GM12878 (cell line): ENCODE measurements at regions of chr10 and their contacts with region 1.

Region 1: DNA sequence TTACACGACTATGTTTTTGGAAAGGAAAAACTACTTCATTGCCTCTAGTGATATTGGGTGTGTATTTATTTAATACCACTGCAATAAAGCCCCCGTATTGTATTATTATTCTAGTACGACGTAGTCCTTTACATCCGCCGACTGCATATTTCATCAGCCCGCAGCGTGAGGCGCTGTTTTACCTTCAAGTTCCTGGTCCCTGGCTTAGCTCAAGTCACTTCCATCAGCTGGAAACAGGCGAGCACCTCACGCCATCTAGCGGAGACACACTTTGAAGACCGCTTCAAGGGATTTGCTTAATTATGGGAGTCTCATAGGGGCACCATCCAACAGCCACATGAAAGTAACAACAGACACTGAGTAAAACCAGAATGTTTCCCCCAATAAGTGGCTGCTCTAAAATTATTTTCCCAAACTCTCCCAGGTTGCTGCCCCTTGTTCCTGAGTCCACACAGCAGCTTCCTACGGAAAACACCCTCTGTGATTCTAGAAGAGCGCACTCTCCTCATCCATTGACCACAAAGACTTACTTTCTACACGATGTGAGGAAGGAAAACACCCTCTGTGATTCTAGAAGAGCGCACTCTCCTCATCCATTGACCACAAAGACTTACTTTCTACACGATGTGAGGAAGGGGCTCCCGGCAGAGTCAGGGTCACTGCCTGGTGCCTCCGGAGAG is 15.7 kb upstream of the ITIH2 start:
- DNase-seq: peak; percentile 62
- ATAC-seq: peak; percentile 92
- H3K4me3 ChIP-seq: no peak overlapping the region
- H3K27ac ChIP-seq: no peak overlapping the region
- H3K4me1 ChIP-seq: no peaks in the 10 kb centered on the region
- H3K27me3 ChIP-seq: no peaks in the 10 kb centered on the region
- CTCF ChIP-seq: peak; percentile 86 to 95 (median 89)
- EP300 ChIP-seq: no peak
- POLR2A ChIP-seq: no peak
- RAD21 ChIP-seq: peak; percentile 89

Region 2: GRCh38 chr10:6920072-6921019 is 767.0 kb before region 1 on chr10:
- CTCF ChIA-PET with region 1: interaction called, 8 read pairs
- POLR2A ChIA-PET with region 1: no interaction called
- RAD21 ChIA-PET with region 1: interaction called, 8 read pairs
- SMC1A ChIA-PET with region 1: interaction called, 4 read pairs
- in situ Hi-C with region 1: no loop called
- intact Hi-C with region 1: loop called (anchors 10 kb)
- DNase-seq: no peak
- ATAC-seq: peak; percentile 99
- H3K4me3 ChIP-seq: no peak overlapping the region
- H3K27ac ChIP-seq: no peak overlapping the region
- H3K4me1 ChIP-seq: peaks cover under 1% of the 10 kb centered on the region
- H3K27me3 ChIP-seq: no peaks in the 10 kb centered on the region
- CTCF ChIP-seq: peak; percentile 92 to 97 (median 95)
- EP300 ChIP-seq: no peak
- POLR2A ChIP-seq: no peak
- RAD21 ChIP-seq: peak; percentile 99

Region 3: DNA sequence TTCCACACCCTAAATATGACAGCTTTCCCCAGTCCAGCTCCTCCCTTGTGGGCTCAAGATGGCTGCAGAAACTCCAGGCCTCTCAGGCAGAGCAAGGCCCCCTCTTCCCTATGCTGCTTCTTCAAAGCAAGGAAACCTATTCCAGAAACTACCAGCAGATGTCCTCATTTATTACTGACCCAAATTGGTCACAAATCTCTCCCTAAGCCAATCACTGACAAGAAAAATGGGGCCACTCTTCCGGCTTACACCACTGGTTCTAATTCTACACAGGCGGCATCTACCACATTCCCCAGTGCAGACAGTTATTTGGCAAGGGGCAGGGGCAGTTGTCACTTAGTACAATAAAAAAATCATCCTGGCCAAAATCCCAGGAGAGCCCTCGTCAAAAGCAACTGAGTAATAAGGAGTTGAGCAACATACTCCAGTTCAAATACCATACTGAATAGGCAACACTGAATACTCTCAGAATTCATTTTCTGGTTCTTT is 426.9 kb before region 1 on chr10:
- CTCF ChIA-PET with region 1: interaction called, 4 read pairs
- POLR2A ChIA-PET with region 1: no interaction called
- RAD21 ChIA-PET with region 1: interaction called, 6 read pairs
- SMC1A ChIA-PET with region 1: interaction called, 3 read pairs
- in situ Hi-C with region 1: no loop called
- intact Hi-C with region 1: loop called (anchors 1 kb)
- DNase-seq: peak; percentile 30
- ATAC-seq: peak; percentile 91
- H3K4me3 ChIP-seq: no peak overlapping the region
- H3K27ac ChIP-seq: no peak overlapping the region
- H3K4me1 ChIP-seq: peaks cover 22% of the 10 kb centered on the region
- H3K27me3 ChIP-seq: no peaks in the 10 kb centered on the region
- CTCF ChIP-seq: peak; percentile 60 to 65 (median 63)
- EP300 ChIP-seq: no peak
- POLR2A ChIP-seq: no peak
- RAD21 ChIP-seq: peak; percentile 76

Region 4: GRCh38 chr10:7471720-7472367 is 215.5 kb before region 1 on chr10:
- CTCF ChIA-PET with region 1: no interaction called
- POLR2A ChIA-PET with region 1: no interaction called
- RAD21 ChIA-PET with region 1: no interaction called
- SMC1A ChIA-PET with region 1: interaction called, 4 read pairs
- in situ Hi-C with region 1: no loop called
- intact Hi-C with region 1: loop called (anchors 1 kb)
- DNase-seq: peak; percentile 98
- ATAC-seq: peak; percentile 87
- H3K4me3 ChIP-seq: peak overlapping the region; percentile 51; the same call in 1 of the 2 replicates
- H3K27ac ChIP-seq: peak overlapping the region; percentile 88
- H3K4me1 ChIP-seq: peaks cover 67% of the 10 kb centered on the region
- H3K27me3 ChIP-seq: no peaks in the 10 kb centered on the region
- CTCF ChIP-seq: no peak
- EP300 ChIP-seq: peak; percentile 100
- POLR2A ChIP-seq: peak; percentile 51
- RAD21 ChIP-seq: 0 out of 2 replicates have a peak, but pooled peaks have one; percentile 10

Region 5: DNA sequence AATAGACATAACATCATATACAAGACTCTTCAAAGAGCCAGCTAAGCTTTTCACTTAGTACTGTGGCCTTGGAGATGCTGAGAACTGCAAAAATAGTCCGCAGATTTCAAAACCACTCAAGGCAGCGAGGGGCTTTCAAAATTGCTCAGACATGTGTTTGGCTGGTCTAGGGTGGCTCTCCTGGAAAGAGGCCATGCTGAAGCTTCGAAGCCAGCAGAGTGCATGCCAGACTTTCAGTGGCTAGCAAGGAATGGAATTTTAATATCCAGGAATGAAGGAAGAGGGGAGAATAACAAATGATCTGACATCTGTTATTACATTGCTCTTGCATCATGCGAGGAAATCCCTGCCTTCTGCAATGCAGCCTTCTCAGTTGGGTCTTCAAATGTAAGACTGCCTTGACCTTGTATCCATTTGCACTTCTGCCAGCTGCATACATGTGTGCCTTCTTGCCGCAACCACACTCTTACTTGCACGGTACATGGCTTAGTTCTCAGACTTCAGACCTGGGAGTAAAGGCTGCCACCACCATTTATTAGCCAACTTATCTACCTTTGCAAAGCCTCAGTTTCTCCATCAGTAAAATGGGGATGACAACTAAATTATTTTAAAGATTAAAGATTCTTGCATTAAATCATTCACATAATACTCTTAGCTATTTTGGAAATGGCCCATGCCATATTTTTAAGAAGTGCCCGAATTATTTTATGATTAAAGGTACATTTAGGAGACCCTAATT is 76.5 kb before region 1 on chr10:
- CTCF ChIA-PET with region 1: interaction called, 3 read pairs
- POLR2A ChIA-PET with region 1: no interaction called
- RAD21 ChIA-PET with region 1: no interaction called
- SMC1A ChIA-PET with region 1: no interaction called
- in situ Hi-C with region 1: no loop called
- intact Hi-C with region 1: loop called (anchors 5 kb)
- DNase-seq: no peak
- ATAC-seq: no peak
- H3K4me3 ChIP-seq: no peak overlapping the region
- H3K27ac ChIP-seq: no peak overlapping the region
- H3K4me1 ChIP-seq: no peaks in the 10 kb centered on the region
- H3K27me3 ChIP-seq: no peaks in the 10 kb centered on the region
- CTCF ChIP-seq: no peak
- EP300 ChIP-seq: no peak
- POLR2A ChIP-seq: no peak
- RAD21 ChIP-seq: no peak

Region 6: DNA sequence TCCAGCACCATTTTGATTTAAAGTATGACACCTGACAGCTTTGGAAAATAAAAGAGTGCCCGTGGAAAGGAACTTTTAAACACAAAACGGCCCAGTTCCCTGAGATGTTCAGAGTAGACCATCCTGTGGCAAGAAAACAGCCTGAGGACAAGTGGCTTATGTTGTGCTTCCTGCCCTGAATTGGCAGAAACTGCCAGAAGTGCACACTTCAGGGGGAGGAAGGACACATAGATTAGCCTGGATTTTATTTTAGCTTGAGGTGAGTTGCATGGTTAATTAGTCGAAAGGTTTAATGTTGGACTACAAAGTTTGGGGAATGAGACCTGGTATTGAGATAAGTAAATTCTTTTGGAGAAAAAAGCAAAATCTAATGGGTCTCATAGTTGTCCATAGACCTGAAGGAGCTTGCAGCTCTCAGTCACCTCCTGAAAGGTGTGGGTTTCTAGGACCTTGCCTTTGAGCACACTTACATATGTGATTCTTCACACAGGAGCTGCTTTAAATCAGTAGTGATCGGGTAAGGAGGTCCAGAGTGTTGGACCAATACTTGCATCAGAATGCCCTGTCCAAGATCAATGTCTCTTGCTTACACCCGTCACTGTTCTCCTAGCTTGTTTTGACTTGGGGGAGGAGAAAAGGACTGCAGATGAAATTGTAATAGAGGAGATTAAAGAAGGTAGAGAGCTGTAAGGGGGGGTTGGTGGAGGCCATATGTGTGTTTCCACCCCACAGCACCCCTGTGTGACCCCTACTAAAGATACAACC is 20.7 kb after region 1 on chr10:
- CTCF ChIA-PET with region 1: interaction called, 11 read pairs
- POLR2A ChIA-PET with region 1: no interaction called
- RAD21 ChIA-PET with region 1: interaction called, 6 read pairs
- SMC1A ChIA-PET with region 1: interaction called, 4 read pairs
- in situ Hi-C with region 1: no loop called
- intact Hi-C with region 1: no loop called
- DNase-seq: no peak
- ATAC-seq: no peak
- H3K4me3 ChIP-seq: no peak overlapping the region
- H3K27ac ChIP-seq: no peak overlapping the region
- H3K4me1 ChIP-seq: no peaks in the 10 kb centered on the region
- H3K27me3 ChIP-seq: peaks cover 0 to 10% of the 10 kb centered on the region in 2 experiments; a peak in 3 of 4 replicates
- CTCF ChIP-seq: no peak
- EP300 ChIP-seq: no peak
- POLR2A ChIP-seq: no peak
- RAD21 ChIP-seq: no peak